Psoas muscle (tissue), 8 donors: ENCODE measurements at regions of chr13 and their contacts with region 1.

Region 1: DNA sequence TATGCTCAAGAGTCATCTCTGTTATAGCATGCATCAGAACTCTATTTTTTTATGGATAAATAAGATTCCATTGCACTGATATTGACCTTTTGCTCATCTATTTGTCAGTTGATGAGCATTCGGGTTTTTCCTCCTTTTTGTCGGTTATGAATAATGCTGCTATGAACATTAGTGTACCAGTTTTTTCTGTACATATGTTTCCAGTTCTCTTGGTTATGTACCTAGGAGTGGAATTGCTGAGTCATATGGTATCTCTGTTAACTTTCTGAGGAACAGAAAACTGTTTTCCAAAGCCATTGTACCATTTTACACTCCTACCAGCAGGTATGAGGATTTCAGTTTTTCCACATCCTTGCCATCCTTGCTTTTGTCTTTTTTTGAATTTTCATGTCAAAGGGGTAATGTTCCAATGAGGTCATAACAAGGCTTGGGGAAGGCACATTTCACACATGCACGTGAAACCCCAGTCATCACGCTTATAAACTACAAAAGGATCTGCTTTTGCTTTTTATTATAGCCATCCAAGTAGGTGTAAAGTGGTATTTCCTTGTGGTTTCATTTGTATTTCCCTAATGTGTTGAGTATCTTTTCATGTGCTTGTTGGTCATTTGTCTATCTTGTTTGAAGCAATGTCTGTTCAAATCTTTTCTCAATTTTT is 14.6 kb downstream of the KBTBD7 start:
- DNase-seq: no peak
- ATAC-seq: no peak
- H3K4me3 ChIP-seq: no peak overlapping the region
- H3K27ac ChIP-seq: no peak overlapping the region
- H3K4me1 ChIP-seq: no peaks in the 10 kb centered on the region
- H3K27me3 ChIP-seq: no peaks in the 10 kb centered on the region
- CTCF ChIP-seq: no peak

Region 2: DNA sequence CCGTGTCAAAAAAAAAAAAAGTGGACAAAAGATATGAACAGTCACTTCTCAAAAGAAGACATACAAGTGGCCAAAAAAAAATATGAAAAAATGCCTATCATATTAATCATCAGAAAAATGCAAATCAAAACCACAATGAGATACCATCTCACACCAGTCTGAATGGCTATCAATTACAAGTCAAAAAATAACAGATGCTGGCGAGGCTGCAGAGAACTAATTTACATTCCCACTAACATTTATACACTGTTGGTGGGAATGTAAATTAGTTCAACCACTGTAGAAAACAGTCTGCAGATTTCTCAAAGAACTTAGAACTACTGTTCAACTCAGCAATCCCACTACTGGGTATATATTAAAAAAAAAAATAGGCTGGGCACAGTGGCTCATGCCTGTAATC is 486.8 kb before region 1 on chr13:
- intact Hi-C with region 1: no loop called
- DNase-seq: no peak
- ATAC-seq: no peak
- H3K4me3 ChIP-seq: no peak overlapping the region
- H3K27ac ChIP-seq: no peak overlapping the region
- H3K4me1 ChIP-seq: no peaks in the 10 kb centered on the region
- H3K27me3 ChIP-seq: no peaks in the 10 kb centered on the region
- CTCF ChIP-seq: no peak

Region 3: DNA sequence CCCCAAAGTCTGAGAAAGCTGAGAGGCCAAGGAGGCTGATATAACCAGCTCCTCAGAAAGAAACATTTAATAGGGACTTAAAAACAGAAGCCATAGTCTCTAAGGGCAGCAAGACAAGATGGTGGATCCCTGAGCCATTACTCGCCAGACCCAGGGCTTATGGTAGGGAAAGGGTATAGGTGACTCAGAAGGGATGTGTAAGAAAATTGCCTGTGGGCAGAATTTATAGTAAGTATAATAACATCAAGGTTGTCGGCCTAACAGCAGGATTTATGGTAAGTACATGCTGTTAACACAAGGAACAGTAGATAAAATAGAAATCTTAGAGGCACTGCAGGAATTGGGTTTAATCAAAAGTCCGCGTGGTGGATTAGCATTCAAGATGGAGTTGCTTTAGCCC is 61.9 kb before region 1 on chr13:
- intact Hi-C with region 1: no loop called
- DNase-seq: no peak
- ATAC-seq: no peak
- H3K4me3 ChIP-seq: no peak overlapping the region
- H3K27ac ChIP-seq: no peak overlapping the region
- H3K4me1 ChIP-seq: no peaks in the 10 kb centered on the region
- H3K27me3 ChIP-seq: no peaks in the 10 kb centered on the region
- CTCF ChIP-seq: no peak

Region 4: GRCh38 chr13:41137951-41138350 is 41.8 kb before region 1 on chr13:
- intact Hi-C with region 1: loop called in 1 of 2 experiments (anchors 5 kb)
- DNase-seq: no peak
- ATAC-seq: no peak
- H3K4me3 ChIP-seq: no peak overlapping the region
- H3K27ac ChIP-seq: no peak overlapping the region
- H3K4me1 ChIP-seq: no peaks in the 10 kb centered on the region
- H3K27me3 ChIP-seq: no peaks in the 10 kb centered on the region
- CTCF ChIP-seq: no peak

Region 5: DNA sequence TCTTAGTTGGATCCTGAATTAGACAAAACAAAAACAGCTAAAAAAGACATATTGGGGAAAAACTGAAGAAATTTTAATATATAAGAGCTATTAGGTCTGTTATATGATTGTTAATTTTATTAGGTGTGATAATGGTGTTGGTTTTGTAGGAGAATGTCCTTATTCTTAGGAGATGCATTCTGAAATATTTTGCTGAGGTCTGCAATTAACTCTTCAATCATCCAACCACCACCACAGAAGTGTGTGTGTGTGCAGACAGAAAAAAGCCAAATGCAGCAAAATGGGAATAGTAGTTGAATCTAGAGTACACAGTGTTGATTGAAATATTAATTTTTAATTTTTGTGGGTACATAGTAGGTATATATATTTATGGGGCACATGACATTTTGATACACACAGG is 26.7 kb after region 1 on chr13:
- intact Hi-C with region 1: loop called in 1 of 2 experiments (anchors 1 kb)
- DNase-seq: no peak
- ATAC-seq: no peak
- H3K4me3 ChIP-seq: no peak overlapping the region
- H3K27ac ChIP-seq: no peak overlapping the region
- H3K4me1 ChIP-seq: no peaks in the 10 kb centered on the region
- H3K27me3 ChIP-seq: no peaks in the 10 kb centered on the region
- CTCF ChIP-seq: no peak